ENCODE measurements at regions of chr10 and their contacts with region 1.

Region 1: GRCh38 chr10:70227548-70228320 is 5.5 kb downstream of the PPA1 start:
- DNase-seq: no peak
- ATAC-seq: peak; percentile 35
- H3K4me3 ChIP-seq: no peak overlapping the region
- H3K27ac ChIP-seq: no peak overlapping the region
- H3K4me1 ChIP-seq: peaks cover 10% of the 10 kb centered on the region
- H3K27me3 ChIP-seq: no peaks in the 10 kb centered on the region
- CTCF ChIP-seq: no peak
- EP300 ChIP-seq: no peak
- POLR2A ChIP-seq: no peak
- RAD21 ChIP-seq: no peak

Region 2: DNA sequence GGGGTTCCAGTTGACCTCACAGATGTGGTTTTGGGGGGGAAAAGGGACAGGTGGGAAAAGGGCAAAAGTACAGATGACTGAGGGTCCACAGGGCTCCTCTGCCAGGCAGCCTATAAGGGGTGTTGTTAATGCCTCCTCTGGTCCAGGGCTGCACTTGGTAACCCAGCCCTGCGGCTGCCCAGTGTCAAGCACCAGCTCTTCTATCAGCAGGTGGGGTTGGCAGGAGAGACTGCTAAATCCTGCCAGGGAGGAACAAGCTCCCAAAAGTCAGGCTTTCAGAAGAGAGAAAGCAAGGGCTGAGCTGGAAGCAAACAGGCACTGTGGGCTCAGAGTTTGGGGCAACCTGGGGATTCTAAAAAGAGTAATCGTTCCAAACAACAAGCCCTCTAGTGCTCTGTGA is 115.6 kb after region 1 on chr10:
- CTCF ChIA-PET with region 1: interaction called, 165 read pairs
- POLR2A ChIA-PET with region 1: no interaction called
- RAD21 ChIA-PET with region 1: interaction called, 43 read pairs
- SMC1A ChIA-PET with region 1: interaction called, 49 read pairs
- in situ Hi-C with region 1: no loop called
- intact Hi-C with region 1: no loop called
- DNase-seq: no peak
- ATAC-seq: no peak
- H3K4me3 ChIP-seq: no peak overlapping the region
- H3K27ac ChIP-seq: no peak overlapping the region
- H3K4me1 ChIP-seq: peaks cover 7% of the 10 kb centered on the region
- H3K27me3 ChIP-seq: no peaks in the 10 kb centered on the region
- CTCF ChIP-seq: no peak
- EP300 ChIP-seq: no peak
- POLR2A ChIP-seq: no peak
- RAD21 ChIP-seq: no peak

Region 3: DNA sequence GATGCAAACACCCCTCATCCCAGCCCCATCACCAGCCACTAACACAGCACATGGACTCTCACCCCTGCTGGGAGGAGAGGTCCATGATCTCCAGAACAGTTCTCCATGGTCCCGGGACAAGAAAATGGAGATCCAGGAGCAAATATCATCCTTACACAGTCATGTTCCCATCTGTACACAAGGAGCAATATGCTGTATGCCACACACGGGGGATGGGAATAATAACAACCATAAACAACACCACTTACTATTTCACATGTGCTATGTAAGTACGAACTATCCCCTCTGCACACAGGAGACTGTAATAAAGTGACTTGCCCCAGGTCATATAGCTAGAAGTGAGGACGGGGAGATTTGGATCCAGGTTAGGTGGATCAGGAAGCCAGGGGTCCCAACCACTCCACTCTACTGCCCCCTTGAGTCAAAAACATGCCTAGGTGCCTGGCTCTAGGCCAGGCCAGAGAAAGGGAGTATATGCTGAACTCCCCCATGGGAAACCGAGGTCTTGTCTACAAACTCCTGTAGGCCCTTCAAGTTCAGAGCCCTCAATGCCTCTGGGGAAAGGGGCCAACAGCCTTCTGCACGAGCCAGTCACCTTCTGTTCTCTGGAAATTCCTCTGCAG is 120.6 kb after region 1 on chr10:
- CTCF ChIA-PET with region 1: interaction called, 165 read pairs
- POLR2A ChIA-PET with region 1: interaction called, 5 read pairs
- RAD21 ChIA-PET with region 1: interaction called, 675 read pairs
- SMC1A ChIA-PET with region 1: interaction called, 72 read pairs
- in situ Hi-C with region 1: no loop called
- intact Hi-C with region 1: no loop called
- DNase-seq: no peak
- ATAC-seq: peak; percentile 94
- H3K4me3 ChIP-seq: no peak overlapping the region
- H3K27ac ChIP-seq: no peak overlapping the region
- H3K4me1 ChIP-seq: peaks cover 11% of the 10 kb centered on the region
- H3K27me3 ChIP-seq: no peaks in the 10 kb centered on the region
- CTCF ChIP-seq: peak; percentile 61 to 65 (median 64)
- EP300 ChIP-seq: no peak
- POLR2A ChIP-seq: no peak
- RAD21 ChIP-seq: peak; percentile 68